CD14-positive monocyte (primary cell): ENCODE measurements at regions of chr16 and their contacts with region 1.

Region 1: GRCh38 chr16:4734063-4734729 is at the starts of genes ANKS3 and DNAAF8:
- DNase-seq: peak; percentile 84 to 89 (median 88)
- H3K4me3 ChIP-seq: peak within 1 kb of the TSS; percentile 89 to 100 (median 99)
- H3K4me3 Mint-ChIP-seq: peak within 1 kb of the TSS; percentile 87 to 99
- H3K27ac ChIP-seq: peak within 1 kb of the TSS; percentile 50 to 61
- H3K27ac Mint-ChIP-seq: peak within 1 kb of the TSS; percentile 72 to 94 (median 93)
- H3K4me1 ChIP-seq: peaks cover 16 to 20% of the 10 kb centered on the region in 2 donors
- H3K4me1 Mint-ChIP-seq: peaks cover 14% of the 10 kb centered on the region
- H3K27me3 ChIP-seq: no peaks in the 10 kb centered on the region
- H3K27me3 Mint-ChIP-seq: peaks cover 0 to 2% (median 0%) of the 10 kb centered on the region in 3 donors
- CTCF ChIP-seq: no peak
- polyA plus RNA-seq, gene ANKS3: 0.59 to 13.7 (median 0.95) TPM
- polyA plus RNA-seq, gene DNAAF8: 0.04 to 0.36 TPM in 2 of 3 donors, not detected in the other

Region 2: DNA sequence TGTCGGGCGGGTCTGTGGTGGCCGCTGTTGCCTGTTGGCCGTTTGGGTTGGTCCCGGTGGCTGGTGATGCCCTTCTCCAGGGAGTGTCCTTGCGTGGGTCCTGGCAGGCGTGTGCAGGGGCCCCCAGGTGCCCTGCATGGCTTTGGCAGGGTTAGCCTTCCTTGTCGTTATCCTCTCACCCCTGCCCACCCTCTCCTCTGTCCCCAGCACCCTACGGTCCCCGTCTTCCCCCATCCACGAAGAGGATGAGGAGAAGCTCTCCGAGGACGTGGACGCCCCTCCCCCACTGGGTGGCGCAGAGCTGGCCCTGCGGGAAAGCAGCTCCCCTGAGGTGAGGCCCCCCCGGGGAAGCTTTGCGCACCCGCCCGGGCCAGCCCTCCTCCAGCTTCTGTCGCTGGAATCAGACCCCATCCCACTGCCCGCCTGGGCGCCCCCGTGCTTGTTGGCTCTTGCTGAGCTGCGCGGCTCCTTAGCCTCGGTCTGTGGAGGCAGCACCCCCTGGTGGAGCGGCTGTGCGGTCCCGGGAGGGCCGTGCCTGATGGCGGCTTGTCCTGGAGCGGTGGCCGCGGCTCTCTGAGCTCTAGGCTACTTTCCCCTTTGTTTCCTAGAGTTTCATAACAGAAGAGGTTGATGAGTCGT is 51.5 kb before region 1 on chr16:
- intact Hi-C with region 1: no loop called
- DNase-seq: peak; percentile 53 to 66 (median 66)
- H3K4me3 ChIP-seq: peak overlapping the region in 2 of 3 experiments; percentile 26 to 54
- H3K4me3 Mint-ChIP-seq: peak overlapping the region; percentile 54 to 70
- H3K27ac ChIP-seq: peak overlapping the region; percentile 60 to 94
- H3K27ac Mint-ChIP-seq: peak overlapping the region; percentile 82 to 96 (median 90)
- H3K4me1 ChIP-seq: peaks cover 46 to 48% of the 10 kb centered on the region in 2 donors
- H3K4me1 Mint-ChIP-seq: peaks cover 42% of the 10 kb centered on the region
- H3K27me3 ChIP-seq: no peaks in the 10 kb centered on the region
- H3K27me3 Mint-ChIP-seq: no peaks in the 10 kb centered on the region
- CTCF ChIP-seq: peak; percentile 77

Region 3: DNA sequence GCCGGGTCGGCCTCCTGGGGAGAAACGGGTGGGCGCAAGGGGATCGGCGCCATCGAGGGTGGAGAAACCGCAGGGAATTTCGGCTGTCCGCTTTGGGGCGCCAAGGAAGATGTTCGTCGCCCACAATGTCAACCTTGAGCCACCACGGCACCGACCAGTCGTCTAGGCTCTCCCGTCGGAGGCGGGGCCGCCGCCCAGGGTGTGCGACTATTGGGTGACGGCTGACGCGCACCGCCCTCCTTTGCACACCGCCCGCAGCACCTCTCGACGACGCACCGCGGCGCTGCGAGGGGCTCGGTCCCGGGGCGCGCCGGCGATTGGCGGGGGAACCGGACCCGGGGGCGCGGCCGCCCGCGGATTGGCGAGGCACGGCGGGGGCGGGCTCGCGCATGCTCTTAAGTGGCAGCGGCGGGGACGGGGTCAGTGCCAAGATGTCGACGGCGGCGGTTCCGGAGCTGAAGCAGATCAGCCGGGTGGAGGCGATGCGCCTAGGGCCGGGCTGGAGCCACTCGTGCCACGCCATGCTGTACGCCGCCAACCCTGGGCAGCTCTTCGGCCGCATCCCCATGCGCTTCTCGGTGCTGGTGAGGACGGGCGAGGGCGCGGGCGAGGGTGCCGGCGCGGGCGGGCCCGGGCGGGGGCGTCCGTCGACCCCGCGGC is 40.8 kb before region 1 on chr16 and contains the start of gene NUDT16L1:
- intact Hi-C with region 1: loop called in 1 of 2 experiments (anchors 2 kb)
- DNase-seq: peak; percentile 92 to 94 (median 94)
- H3K4me3 ChIP-seq: peak within 1 kb of the TSS; percentile 67 to 97 (median 83)
- H3K4me3 Mint-ChIP-seq: peak within 1 kb of the TSS; percentile 80 to 86
- H3K27ac ChIP-seq: peak within 1 kb of the TSS; percentile 61 to 88
- H3K27ac Mint-ChIP-seq: peak within 1 kb of the TSS; percentile 78 to 91 (median 88)
- H3K4me1 ChIP-seq: peaks cover 50 to 63% of the 10 kb centered on the region in 2 donors
- H3K4me1 Mint-ChIP-seq: peaks cover 45% of the 10 kb centered on the region
- H3K27me3 ChIP-seq: no peaks in the 10 kb centered on the region
- H3K27me3 Mint-ChIP-seq: peaks cover 0 to 1% (median 0%) of the 10 kb centered on the region in 3 donors
- CTCF ChIP-seq: peak; percentile 27
- polyA plus RNA-seq, gene NUDT16L1: 40.0 to 62.7 (median 41.1) TPM

Region 4: DNA sequence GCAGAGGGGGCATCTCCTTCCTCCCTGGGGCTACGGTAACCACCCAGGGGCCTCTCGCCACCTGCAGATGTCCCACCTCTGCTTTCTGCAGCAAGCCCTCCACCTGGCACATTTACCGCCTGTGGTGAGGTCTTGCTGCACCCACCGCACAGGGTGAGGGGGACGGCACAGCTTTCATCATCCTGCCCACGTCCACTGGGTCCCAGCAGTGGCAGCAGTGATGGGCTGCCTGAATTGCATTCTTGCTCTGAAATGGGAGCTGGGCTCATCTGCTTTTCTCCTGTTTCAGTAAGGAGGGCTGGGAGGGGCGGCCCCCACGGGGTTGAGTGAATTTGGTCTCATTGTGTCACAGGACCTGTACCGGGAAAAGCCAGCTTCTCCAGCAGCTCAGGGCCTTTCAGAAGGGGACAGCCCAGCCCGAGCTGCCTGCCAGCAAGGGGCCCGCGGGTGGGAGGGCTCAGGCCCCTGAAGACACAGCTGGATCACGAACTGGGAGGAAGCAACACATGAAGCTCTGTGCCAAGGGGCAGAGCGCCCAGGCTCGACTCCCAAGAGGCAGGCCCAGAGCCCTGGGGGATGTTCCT is 12.9 kb after region 1 on chr16:
- intact Hi-C with region 1: no loop called
- DNase-seq: no peak
- H3K4me3 ChIP-seq: no peak overlapping the region
- H3K4me3 Mint-ChIP-seq: no peak overlapping the region
- H3K27ac ChIP-seq: no peak overlapping the region
- H3K27ac Mint-ChIP-seq: no peak overlapping the region
- H3K4me1 ChIP-seq: peaks cover 4 to 6% of the 10 kb centered on the region in 2 donors
- H3K4me1 Mint-ChIP-seq: peaks cover 10% of the 10 kb centered on the region
- H3K27me3 ChIP-seq: no peaks in the 10 kb centered on the region
- H3K27me3 Mint-ChIP-seq: peaks cover 8 to 17% (median 12%) of the 10 kb centered on the region in 3 donors
- CTCF ChIP-seq: no peak

Region 5: GRCh38 chr16:4766874-4767628 is 32.9 kb after region 1 on chr16 and contains the start of gene ZNF500:
- intact Hi-C with region 1: loop called (anchors 1 to 2 kb)
- DNase-seq: peak; percentile 91 to 97 (median 93)
- H3K4me3 ChIP-seq: peak within 1 kb of the TSS; percentile 73 to 93 (median 91)
- H3K4me3 Mint-ChIP-seq: peak within 1 kb of the TSS; percentile 88 to 97
- H3K27ac ChIP-seq: peak within 1 kb of the TSS; percentile 1 to 78
- H3K27ac Mint-ChIP-seq: peak within 1 kb of the TSS; percentile 88 to 96 (median 93)
- H3K4me1 ChIP-seq: peaks cover 25 to 36% of the 10 kb centered on the region in 2 donors
- H3K4me1 Mint-ChIP-seq: peaks cover 35% of the 10 kb centered on the region
- H3K27me3 ChIP-seq: no peaks in the 10 kb centered on the region
- H3K27me3 Mint-ChIP-seq: peaks cover 0 to 5% (median 1%) of the 10 kb centered on the region in 3 donors
- CTCF ChIP-seq: no peak
- polyA plus RNA-seq, gene ZNF500: 2.4 to 5.6 (median 5.2) TPM